B cell (primary cell): ENCODE measurements at regions of chr2 and their contacts with region 1.

Region 1: DNA sequence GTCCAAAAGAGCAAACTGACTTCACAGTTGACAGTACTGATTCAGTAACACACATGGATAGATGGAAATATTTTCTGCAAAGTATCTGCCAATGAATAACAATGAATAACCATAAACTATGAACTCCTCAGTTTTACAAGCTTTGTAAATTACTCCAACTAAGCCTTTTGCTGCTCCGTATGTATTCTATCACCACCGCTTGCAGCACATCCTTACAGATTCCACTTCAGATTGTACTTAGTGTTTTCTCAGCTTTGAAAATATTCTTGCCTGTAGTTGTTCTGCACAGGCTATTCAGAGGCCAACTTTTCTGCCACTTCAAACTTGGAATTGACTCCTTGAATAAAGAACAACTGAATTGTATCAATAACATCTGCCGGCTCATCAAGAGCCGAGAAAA is 36.2 kb downstream of the TLK1 start:
- DNase-seq: no peak
- ATAC-seq: no peak
- H3K4me3 ChIP-seq: no peak overlapping the region
- H3K4me3 Mint-ChIP-seq: no peak overlapping the region
- H3K27ac ChIP-seq: no peak overlapping the region
- H3K27ac Mint-ChIP-seq: no peak overlapping the region
- H3K4me1 ChIP-seq: peaks cover 12 to 28% of the 10 kb centered on the region in 2 donors
- H3K4me1 Mint-ChIP-seq: peaks cover 59% of the 10 kb centered on the region
- H3K27me3 ChIP-seq: no peaks in the 10 kb centered on the region
- H3K27me3 Mint-ChIP-seq: no peaks in the 10 kb centered on the region
- CTCF ChIP-seq: no peak

Region 2: DNA sequence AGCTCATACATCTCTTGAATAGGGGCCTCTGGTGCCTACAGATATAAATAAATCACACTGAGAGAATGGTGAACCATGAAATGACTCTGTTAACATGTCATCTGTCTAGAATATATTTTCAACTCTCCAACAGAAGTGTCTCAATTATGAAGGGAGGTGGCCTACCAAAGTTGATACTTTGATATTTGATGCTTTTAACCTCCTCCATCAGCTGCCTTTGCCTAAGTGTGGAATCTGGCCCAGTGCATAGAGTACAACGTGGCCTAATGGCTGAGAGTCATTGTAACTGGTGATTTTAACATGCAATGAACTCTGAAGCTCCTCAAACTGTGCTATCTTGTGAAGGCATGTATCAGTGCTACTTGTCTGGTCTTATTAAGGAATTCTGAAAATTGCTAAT is 853.2 kb before region 1 on chr2:
- CTCF ChIA-PET with region 1: no interaction called
- POLR2A ChIA-PET with region 1: no interaction called
- intact Hi-C with region 1: no loop called
- DNase-seq: no peak
- ATAC-seq: no peak
- H3K4me3 ChIP-seq: no peak overlapping the region
- H3K4me3 Mint-ChIP-seq: no peak overlapping the region
- H3K27ac ChIP-seq: no peak overlapping the region
- H3K27ac Mint-ChIP-seq: no peak overlapping the region
- H3K4me1 ChIP-seq: no peaks in the 10 kb centered on the region
- H3K4me1 Mint-ChIP-seq: no peaks in the 10 kb centered on the region
- H3K27me3 ChIP-seq: no peaks in the 10 kb centered on the region
- H3K27me3 Mint-ChIP-seq: no peaks in the 10 kb centered on the region
- CTCF ChIP-seq: no peak

Region 3: GRCh38 chr2:171086352-171087290 is 37.9 kb before region 1 on chr2:
- CTCF ChIA-PET with region 1: interaction called, 4 read pairs
- POLR2A ChIA-PET with region 1: no interaction called
- intact Hi-C with region 1: loop called (anchors 5 kb)
- DNase-seq: peak; percentile 57
- ATAC-seq: peak; percentile 63
- H3K4me3 ChIP-seq: no peak overlapping the region
- H3K4me3 Mint-ChIP-seq: no peak overlapping the region
- H3K27ac ChIP-seq: peak overlapping the region in 1 of 2 donors; percentile 1
- H3K27ac Mint-ChIP-seq: peak overlapping the region; percentile 17
- H3K4me1 ChIP-seq: peaks cover 3% of the 10 kb centered on the region in 2 donors
- H3K4me1 Mint-ChIP-seq: peaks cover 43% of the 10 kb centered on the region
- H3K27me3 ChIP-seq: no peaks in the 10 kb centered on the region
- H3K27me3 Mint-ChIP-seq: no peaks in the 10 kb centered on the region
- CTCF ChIP-seq: peak; percentile 66

Region 4: DNA sequence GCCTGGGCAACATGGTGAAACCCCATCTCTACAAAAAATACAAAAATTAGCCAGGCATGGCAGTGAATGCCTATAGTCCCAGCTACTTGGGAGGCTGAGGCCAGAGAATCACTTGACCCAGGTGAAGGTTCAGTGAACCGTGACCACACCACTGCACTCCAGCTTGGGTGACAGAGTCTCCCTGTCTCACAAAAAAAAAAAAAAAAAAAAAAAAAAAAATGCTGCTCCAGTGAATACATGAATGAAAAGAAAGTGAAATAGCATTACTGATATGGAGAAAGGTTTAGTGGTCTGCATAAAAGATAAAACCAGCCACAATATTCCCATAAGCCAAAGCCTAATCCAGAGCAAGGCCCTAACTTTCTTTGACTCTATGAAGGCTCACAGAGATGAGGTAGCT is 264.8 kb after region 1 on chr2:
- CTCF ChIA-PET with region 1: no interaction called
- POLR2A ChIA-PET with region 1: interaction called, 14 read pairs
- intact Hi-C with region 1: no loop called
- DNase-seq: no peak
- ATAC-seq: no peak
- H3K4me3 ChIP-seq: no peak overlapping the region
- H3K4me3 Mint-ChIP-seq: peak overlapping the region; percentile 61
- H3K27ac ChIP-seq: peak overlapping the region in 1 of 2 donors; percentile 35
- H3K27ac Mint-ChIP-seq: peak overlapping the region; percentile 57
- H3K4me1 ChIP-seq: peaks cover 44 to 50% of the 10 kb centered on the region in 2 donors
- H3K4me1 Mint-ChIP-seq: peaks cover 55% of the 10 kb centered on the region
- H3K27me3 ChIP-seq: no peaks in the 10 kb centered on the region
- H3K27me3 Mint-ChIP-seq: no peaks in the 10 kb centered on the region
- CTCF ChIP-seq: no peak